ENCODE measurements at regions of chr4 and their contacts with region 1.

Region 1: GRCh38 chr4:155787113-155787710 is 28.4 kb downstream of the GUCY1B1 start:
- DNase-seq: no peak
- H3K4me3 ChIP-seq: no peak overlapping the region
- H3K27ac ChIP-seq: no peak overlapping the region
- H3K4me1 ChIP-seq: no peaks in the 10 kb centered on the region
- H3K27me3 ChIP-seq: no peaks in the 10 kb centered on the region
- CTCF ChIP-seq: peak in 1 of 3 donors; percentile 47
- EP300 ChIP-seq: no peak
- POLR2A ChIP-seq: no peak

Region 2: DNA sequence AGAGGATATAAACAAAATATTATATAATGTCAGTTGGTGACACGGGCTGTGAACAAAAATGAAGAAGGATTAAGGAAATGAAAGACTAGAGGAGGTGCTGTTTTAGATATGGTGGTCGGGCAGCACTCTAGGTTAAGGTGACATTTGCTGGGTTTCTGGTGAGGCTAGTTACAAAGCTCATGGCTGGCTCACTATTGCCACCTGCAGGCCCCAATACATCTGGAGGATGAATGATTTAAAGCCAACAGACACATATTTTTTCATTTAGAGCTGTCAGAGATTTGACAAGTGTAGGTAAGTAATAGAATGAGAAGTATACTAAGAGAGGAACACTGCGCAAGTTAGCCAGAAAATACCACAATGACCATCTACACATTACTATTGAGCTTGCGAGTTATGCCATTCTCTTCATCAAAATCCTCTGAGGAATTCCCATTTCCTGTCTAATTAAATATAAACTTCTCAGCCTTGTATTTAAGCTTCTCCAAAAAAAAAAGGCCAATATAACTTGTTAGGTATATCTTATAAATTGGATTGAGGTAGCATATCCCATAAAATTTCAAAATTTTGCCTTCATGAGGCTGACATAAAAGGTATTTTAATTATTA is 1168.4 kb before region 1 on chr4:
- intact Hi-C with region 1: no loop called
- DNase-seq: peak in 3 of 5 donors; percentile 18 to 23 (median 19)
- H3K4me3 ChIP-seq: no peak overlapping the region
- H3K27ac ChIP-seq: no peak overlapping the region
- H3K4me1 ChIP-seq: no peaks in the 10 kb centered on the region
- H3K27me3 ChIP-seq: no peaks in the 10 kb centered on the region
- CTCF ChIP-seq: no peak
- EP300 ChIP-seq: no peak
- POLR2A ChIP-seq: no peak

Region 3: GRCh38 chr4:155442267-155443105 is 344.7 kb before region 1 on chr4:
- intact Hi-C with region 1: loop called in 1 of 4 experiments (anchors 10 kb)
- DNase-seq: peak; percentile 25 to 82 (median 77)
- H3K4me3 ChIP-seq: no peak overlapping the region
- H3K27ac ChIP-seq: no peak overlapping the region
- H3K4me1 ChIP-seq: no peaks in the 10 kb centered on the region
- H3K27me3 ChIP-seq: no peaks in the 10 kb centered on the region
- CTCF ChIP-seq: peak; percentile 55 to 71 (median 61)
- EP300 ChIP-seq: no peak
- POLR2A ChIP-seq: no peak

Region 4: GRCh38 chr4:156006192-156006591 is 219.0 kb after region 1 on chr4:
- intact Hi-C with region 1: no loop called
- DNase-seq: no peak
- H3K4me3 ChIP-seq: no peak overlapping the region
- H3K27ac ChIP-seq: no peak overlapping the region
- H3K4me1 ChIP-seq: no peaks in the 10 kb centered on the region
- H3K27me3 ChIP-seq: no peaks in the 10 kb centered on the region
- CTCF ChIP-seq: no peak
- EP300 ChIP-seq: no peak
- POLR2A ChIP-seq: no peak